ENCODE measurements at regions of chr18 and their contacts with region 1.

Region 1: GRCh38 chr18:7272311-7273049 is 41.6 kb downstream of the LRRC30 start:
- DNase-seq: peak; percentile 56 to 86 (median 74)
- ATAC-seq: peak; percentile 90
- H3K4me3 ChIP-seq: peak overlapping the region in 1 of 2 donors; percentile 9
- H3K27ac ChIP-seq: peak overlapping the region; percentile 75 to 83
- H3K4me1 ChIP-seq: peaks cover 10 to 30% of the 10 kb centered on the region in 2 donors
- H3K27me3 ChIP-seq: no peaks in the 10 kb centered on the region
- CTCF ChIP-seq: peak; percentile 45 to 52

Region 2: DNA sequence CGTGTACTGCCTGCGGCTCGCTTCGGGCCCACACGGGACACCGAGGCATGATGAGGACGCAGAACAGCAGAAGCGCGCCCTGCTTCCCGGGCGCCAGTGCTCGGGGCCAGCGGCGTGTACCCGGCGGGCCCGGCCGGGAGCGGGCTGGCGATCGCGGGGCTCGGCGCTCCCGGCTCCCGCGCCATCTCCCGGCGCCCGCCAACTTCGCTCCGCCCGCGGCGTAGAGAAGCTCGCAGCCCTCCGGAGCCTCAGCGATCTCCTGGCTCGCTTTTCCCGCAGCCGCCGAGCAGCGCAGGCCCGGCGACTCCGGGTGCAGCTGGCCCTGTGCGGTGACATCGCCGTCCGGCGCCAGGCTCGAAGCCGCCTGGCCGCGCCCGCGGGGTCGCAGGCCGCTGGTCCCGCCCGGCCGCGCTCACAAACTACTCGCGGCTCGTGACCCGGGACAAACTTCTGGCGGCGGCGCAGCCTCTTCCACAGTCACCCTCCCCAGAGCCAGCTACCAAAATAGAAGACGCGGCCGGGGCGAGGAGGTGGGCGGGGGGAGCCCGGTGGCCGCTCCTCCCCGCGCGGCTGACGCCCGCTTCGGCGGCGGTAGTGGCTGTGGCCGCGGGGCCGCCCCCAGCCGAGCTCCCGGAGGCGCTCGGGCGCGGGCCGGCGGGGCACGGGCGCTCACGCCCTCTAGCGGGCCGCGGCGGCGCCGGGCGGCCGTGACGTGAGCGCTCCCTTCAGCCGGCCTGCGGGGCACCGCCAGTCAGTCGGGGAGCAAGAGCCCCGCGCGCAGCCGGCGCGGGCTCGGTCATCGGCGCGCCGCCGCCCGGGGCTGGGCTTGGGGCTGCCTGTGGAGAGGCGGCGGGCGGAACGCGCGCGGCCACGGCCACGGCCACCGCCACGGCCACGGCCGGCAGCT is 294.3 kb after region 1 on chr18 and contains the start of gene PTPRM:
- intact Hi-C with region 1: loop called in 1 of 2 experiments (anchors 10 kb)
- DNase-seq: peak; percentile 84 to 93 (median 88)
- ATAC-seq: peak; percentile 90
- H3K4me3 ChIP-seq: peak within 1 kb of the TSS; percentile 68 to 81
- H3K27ac ChIP-seq: peak within 1 kb of the TSS; percentile 93 to 98
- H3K4me1 ChIP-seq: peaks cover 15 to 16% of the 10 kb centered on the region in 2 donors
- H3K27me3 ChIP-seq: peaks cover 0 to 39% of the 10 kb centered on the region in 2 donors
- CTCF ChIP-seq: no peak
- polyA plus RNA-seq, gene PTPRM: 89.2 to 99.6 (median 94.1) TPM